ENCODE measurements at regions of chr10 and their contacts with region 1.

Region 1: GRCh38 chr10:115355162-115355760 is 262.1 kb downstream of the ATRNL1 start:
- DNase-seq: peak; percentile 77
- H3K4me3 Mint-ChIP-seq: no peak overlapping the region
- H3K27ac Mint-ChIP-seq: no peak overlapping the region
- H3K4me1 Mint-ChIP-seq: no peaks in the 10 kb centered on the region
- H3K27me3 Mint-ChIP-seq: peaks cover 90% of the 10 kb centered on the region
- CTCF ChIP-seq: peak; percentile 90

Region 2: DNA sequence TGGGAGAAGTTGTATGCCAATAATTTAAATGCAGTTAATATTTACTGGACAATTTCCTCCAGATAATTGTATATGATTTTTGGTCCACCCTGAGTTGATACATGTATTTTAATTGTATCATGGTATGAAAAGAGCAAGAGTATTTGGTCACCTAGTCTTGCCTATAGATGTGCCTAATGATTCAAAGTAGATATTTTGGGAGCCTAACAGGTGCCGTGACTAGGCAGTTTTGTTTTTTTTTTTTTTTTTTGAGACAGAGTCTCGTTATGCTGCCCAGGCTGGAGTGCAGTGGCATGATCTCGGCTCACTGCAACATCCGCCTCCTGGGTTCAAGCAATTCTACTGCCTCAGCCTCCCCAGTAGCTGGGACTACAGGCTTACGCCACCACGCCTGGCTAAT is 321.4 kb before region 1 on chr10:
- CTCF ChIA-PET with region 1: no interaction called
- POLR2A ChIA-PET with region 1: no interaction called
- intact Hi-C with region 1: no loop called
- DNase-seq: no peak
- H3K4me3 Mint-ChIP-seq: no peak overlapping the region
- H3K27ac Mint-ChIP-seq: no peak overlapping the region
- H3K4me1 Mint-ChIP-seq: no peaks in the 10 kb centered on the region
- H3K27me3 Mint-ChIP-seq: no peaks in the 10 kb centered on the region
- CTCF ChIP-seq: no peak

Region 3: DNA sequence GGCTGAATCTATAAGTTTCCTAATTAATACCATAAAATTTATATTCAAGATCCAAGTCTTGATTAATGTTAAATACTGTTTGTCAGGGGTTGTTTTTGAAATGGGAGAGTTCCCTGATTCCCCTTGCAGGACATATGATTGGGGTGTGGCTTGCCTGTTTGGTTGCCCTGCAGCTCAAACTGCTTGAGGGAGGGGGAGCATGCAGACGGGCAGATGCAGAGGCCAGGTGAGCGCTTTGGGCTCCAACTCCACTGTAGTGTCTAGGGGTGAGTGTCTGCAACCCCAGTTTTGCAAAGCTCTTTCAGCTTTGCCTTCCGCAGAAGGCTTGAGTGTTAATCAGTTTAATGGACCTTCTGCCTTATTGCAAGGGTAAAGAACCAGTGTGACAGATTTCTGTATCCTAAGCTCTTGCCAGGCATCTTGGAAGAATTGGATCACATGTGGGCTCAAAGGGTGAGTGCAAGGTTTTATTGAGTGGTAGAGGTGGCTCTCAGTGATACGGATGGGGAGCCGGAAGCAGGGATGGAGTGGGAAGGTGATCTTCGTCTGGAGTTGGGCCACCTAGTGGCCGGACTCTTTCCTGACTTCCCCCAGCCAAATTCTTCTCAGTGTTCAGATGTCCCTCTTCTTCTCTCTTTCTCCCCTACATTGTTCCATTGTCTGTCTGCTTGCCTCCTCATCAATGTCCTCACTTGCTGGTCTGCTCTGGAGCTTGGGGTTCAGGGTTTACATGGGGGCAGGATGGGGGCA is 217.6 kb after region 1 on chr10:
- CTCF ChIA-PET with region 1: interaction called, 3 read pairs
- POLR2A ChIA-PET with region 1: no interaction called
- intact Hi-C with region 1: loop called (anchors 5 kb)
- DNase-seq: peak; percentile 32
- H3K4me3 Mint-ChIP-seq: no peak overlapping the region
- H3K27ac Mint-ChIP-seq: no peak overlapping the region
- H3K4me1 Mint-ChIP-seq: no peaks in the 10 kb centered on the region
- H3K27me3 Mint-ChIP-seq: peaks cover 81% of the 10 kb centered on the region
- CTCF ChIP-seq: peak; percentile 34

Region 4: DNA sequence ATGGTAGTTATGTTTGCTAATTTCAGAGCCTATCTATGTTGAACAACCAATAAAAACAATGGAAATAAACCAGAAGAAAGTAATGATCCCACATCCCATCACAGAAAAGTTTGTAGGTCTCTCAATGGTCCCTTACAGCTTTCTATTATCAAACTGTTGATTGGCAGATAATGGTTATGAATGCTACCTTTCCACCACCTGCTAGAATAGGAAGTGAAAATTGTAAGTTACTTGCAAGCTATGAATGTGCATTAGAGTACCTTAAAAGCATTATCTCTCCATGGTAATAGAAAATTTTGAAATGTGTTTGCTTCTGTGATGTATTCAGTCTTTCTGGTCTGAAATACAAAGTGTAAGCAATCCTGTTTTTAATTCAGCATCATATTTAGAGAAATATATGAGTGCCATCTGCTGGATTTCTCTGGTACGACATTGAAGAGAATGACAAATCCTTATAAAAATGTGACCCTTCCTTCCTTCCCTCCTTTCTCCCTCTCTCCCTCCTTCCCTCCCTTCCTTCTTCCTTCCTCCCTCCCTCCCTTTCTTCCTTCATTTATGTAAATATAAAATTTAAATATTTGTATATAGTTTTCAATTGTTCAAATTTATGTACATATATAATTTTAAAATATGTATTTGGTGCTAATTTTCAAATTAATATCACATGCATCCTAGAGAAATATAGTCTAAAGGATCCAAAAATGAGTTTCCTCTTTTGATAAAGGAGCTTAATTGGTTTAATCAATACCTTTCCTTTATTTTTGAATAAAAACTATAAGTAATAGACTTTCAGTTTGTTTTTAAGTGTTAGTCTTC is 1030.9 kb after region 1 on chr10:
- CTCF ChIA-PET with region 1: interaction called, 3 read pairs
- POLR2A ChIA-PET with region 1: no interaction called
- intact Hi-C with region 1: loop called (anchors 5 kb)
- DNase-seq: peak; percentile 45
- H3K4me3 Mint-ChIP-seq: no peak overlapping the region
- H3K27ac Mint-ChIP-seq: no peak overlapping the region
- H3K4me1 Mint-ChIP-seq: no peaks in the 10 kb centered on the region
- H3K27me3 Mint-ChIP-seq: no peaks in the 10 kb centered on the region
- CTCF ChIP-seq: peak; percentile 59